Esophagus squamous epithelium (tissue), 5 donors: ENCODE measurements at regions of chr6 and their contacts with region 1.

Region 1: GRCh38 chr6:20056350-20056992 is 155.8 kb downstream of the MBOAT1 start:
- DNase-seq: no peak
- H3K4me3 ChIP-seq: no peak overlapping the region
- H3K27ac ChIP-seq: no peak overlapping the region
- H3K4me1 ChIP-seq: peaks cover 0 to 5% (median 4%) of the 10 kb centered on the region in 3 donors
- H3K27me3 ChIP-seq: no peaks in the 10 kb centered on the region
- CTCF ChIP-seq: peak in 5 of 6 experiments; percentile 46 to 69 (median 51)
- POLR2A ChIP-seq: no peak

Region 2: DNA sequence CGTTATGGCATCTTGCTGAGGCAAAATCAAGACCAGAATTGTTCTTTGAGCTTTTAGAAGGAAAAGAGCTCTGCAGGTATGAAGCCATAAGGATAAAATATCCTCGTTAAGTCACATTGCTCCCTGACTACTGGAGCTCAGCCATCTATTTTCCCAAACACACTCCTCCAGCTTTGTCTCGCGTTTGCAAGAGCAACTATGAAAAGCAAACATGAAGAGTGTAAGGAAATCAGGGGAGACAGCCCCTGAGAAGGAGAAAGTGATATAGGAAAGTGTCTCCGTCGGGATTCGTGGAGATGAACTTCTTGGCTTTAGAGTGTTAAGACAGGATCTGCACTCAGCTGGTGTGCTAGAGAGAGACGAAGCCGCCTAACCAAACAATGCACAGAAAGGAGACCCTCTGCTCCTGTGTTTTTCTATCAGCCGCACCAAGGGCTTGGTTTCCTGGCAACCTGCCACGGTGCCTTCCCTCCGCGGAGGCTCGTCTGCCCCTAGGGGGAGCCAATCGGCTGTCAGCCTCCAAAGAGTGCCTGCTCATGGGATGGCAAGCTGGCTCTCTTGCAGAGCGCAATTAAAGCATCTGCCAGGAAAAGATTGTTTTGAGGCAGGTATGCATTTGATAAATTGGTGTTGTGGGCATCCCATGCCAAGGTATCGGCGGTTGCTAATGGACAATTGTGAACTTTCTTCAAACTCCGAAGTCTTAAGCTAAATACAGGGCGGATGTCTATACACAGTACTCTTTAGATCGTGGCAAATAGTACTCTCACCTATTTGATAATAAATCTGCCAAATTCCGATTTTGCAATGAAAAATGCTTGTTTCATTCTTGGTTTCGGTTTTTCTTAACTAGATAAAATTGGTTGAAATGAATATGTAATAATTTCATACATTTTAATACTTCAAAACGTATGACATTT is 1066.2 kb before region 1 on chr6:
- intact Hi-C with region 1: loop called (anchors 10 kb)
- DNase-seq: no peak
- H3K4me3 ChIP-seq: no peak overlapping the region
- H3K27ac ChIP-seq: no peak overlapping the region
- H3K4me1 ChIP-seq: peaks cover 0 to 9% (median 4%) of the 10 kb centered on the region in 3 donors
- H3K27me3 ChIP-seq: no peaks in the 10 kb centered on the region
- CTCF ChIP-seq: peak in 4 of 6 experiments; percentile 32 to 55 (median 38)
- POLR2A ChIP-seq: no peak

Region 3: DNA sequence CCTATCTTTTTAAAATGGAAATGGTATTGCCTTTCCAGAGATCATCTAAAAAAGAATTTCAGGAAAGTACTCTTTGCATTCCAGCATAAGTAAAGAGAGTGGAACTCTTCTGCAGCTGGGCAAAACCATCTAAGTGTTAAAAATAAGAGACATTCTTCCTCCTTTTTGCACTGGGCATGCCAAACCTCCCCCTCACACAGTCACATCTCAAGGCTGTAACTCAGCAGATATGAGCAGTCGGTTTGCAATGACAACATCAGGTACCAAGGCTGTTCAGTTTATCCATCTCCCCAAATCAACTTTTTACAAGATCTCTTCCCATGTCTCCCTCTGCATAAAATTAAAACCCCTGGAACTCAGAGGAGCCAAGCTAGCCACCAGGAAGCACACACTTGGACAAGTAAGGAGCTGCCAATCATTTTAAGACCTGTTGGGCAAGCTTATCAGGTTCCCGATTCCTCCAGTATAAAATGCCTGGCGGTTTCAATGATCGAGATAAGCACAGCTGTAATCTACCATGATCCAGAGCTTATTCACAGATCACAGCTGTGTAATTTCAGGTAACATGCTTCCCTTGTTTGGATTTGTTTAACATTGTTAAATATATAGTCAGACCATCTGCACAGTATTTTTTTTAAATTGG is 196.1 kb before region 1 on chr6:
- intact Hi-C with region 1: no loop called
- DNase-seq: no peak
- H3K4me3 ChIP-seq: no peak overlapping the region
- H3K27ac ChIP-seq: no peak overlapping the region
- H3K4me1 ChIP-seq: peaks cover 0 to 18% (median 2%) of the 10 kb centered on the region in 3 donors
- H3K27me3 ChIP-seq: peaks cover 0 to under 1% (median 0%) of the 10 kb centered on the region in 4 donors
- CTCF ChIP-seq: no peak
- POLR2A ChIP-seq: no peak